CD4-positive, alpha-beta T cell (primary cell): ENCODE measurements at regions of chr10 and their contacts with region 1.

Region 1: DNA sequence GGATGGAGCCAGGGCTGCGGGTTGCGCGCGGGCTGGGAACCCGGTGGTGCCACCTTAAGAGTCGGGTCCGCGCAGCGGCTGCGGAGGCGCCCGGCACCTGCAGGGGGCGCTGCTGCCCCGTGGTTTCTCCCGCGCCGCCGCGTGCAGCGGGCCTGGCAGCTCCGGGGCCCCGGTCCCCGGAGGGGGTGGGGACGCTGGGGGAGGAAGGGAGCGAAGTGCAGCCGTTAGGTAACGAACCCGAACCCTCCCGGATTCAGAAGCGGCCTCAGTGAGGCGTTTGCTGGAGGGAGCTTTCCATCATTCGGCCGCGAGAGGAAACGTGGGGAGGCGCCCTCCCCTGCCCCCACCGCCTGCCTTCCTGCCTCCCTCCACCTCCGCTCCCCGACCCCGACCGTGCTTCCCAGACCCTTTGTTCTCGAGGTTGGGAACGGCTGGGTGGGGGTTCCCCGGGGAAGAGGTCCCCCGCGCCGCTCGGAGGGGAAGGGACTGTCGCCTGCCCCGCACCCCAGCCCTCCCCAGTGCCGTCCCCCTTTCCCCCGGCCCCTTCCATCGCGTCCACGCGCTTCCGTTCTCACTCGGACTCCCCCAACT is 29.6 kb downstream of the SKIDA1 start:
- DNase-seq: peak; percentile 73 to 93 (median 86)
- ATAC-seq: peak; percentile 84
- H3K4me3 ChIP-seq: peak overlapping the region; percentile 73
- H3K4me3 Mint-ChIP-seq: peak overlapping the region; percentile 78
- H3K27ac ChIP-seq: no peak overlapping the region
- H3K27ac Mint-ChIP-seq: peak overlapping the region; percentile 16
- H3K4me1 ChIP-seq: peaks cover 46% of the 10 kb centered on the region
- H3K4me1 Mint-ChIP-seq: peaks cover 25% of the 10 kb centered on the region
- H3K27me3 ChIP-seq: peaks cover 47 to 65% of the 10 kb centered on the region in 2 experiments
- H3K27me3 Mint-ChIP-seq: peaks cover 68% of the 10 kb centered on the region
- CTCF ChIP-seq: peak; percentile 93

Region 2: GRCh38 chr10:21208666-21209316 is 287.1 kb before region 1 on chr10:
- CTCF ChIA-PET with region 1: no interaction called
- POLR2A ChIA-PET with region 1: no interaction called
- intact Hi-C with region 1: no loop called
- DNase-seq: no peak
- ATAC-seq: no peak
- H3K4me3 ChIP-seq: no peak overlapping the region
- H3K4me3 Mint-ChIP-seq: no peak overlapping the region
- H3K27ac ChIP-seq: no peak overlapping the region
- H3K27ac Mint-ChIP-seq: no peak overlapping the region
- H3K4me1 ChIP-seq: no peaks in the 10 kb centered on the region
- H3K4me1 Mint-ChIP-seq: no peaks in the 10 kb centered on the region
- H3K27me3 ChIP-seq: peaks cover 0 to 3% of the 10 kb centered on the region in 2 experiments
- H3K27me3 Mint-ChIP-seq: peaks cover 28% of the 10 kb centered on the region
- CTCF ChIP-seq: no peak

Region 3: DNA sequence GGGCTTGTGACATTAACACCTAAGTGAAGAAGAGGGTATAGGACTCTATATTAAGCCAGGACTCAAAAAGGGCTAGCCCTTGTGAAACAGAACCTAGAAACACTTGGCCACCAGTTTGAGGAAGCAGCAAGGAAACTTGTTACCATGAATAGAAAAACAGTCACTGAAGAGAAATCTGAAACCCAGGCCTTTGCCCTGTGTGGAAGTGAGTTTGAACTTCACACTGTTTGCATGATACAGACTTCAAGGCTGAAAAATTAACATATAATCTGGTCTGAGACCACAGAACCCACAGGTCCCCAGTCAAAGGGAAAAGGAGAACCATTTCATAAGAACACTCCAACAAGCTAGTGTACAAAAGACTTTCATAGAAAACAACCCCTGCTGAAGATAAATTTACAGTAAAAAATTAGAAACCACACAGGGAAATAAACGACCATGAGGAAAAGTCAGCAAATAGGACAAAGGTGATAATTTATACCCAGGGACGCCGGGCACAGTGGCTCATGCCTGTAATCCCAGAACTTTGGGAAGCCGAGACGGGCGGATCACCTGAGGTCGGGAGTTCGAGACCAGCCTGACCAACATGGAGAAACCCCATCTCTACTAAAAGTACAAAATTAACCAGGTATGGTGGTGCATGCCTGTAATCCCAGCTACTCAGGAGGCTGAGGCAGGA is 46.4 kb before region 1 on chr10:
- CTCF ChIA-PET with region 1: no interaction called
- POLR2A ChIA-PET with region 1: no interaction called
- intact Hi-C with region 1: no loop called
- DNase-seq: no peak
- ATAC-seq: no peak
- H3K4me3 ChIP-seq: no peak overlapping the region
- H3K4me3 Mint-ChIP-seq: no peak overlapping the region
- H3K27ac ChIP-seq: no peak overlapping the region
- H3K27ac Mint-ChIP-seq: no peak overlapping the region
- H3K4me1 ChIP-seq: no peaks in the 10 kb centered on the region
- H3K4me1 Mint-ChIP-seq: no peaks in the 10 kb centered on the region
- H3K27me3 ChIP-seq: no peaks in the 10 kb centered on the region
- H3K27me3 Mint-ChIP-seq: peaks cover 10% of the 10 kb centered on the region
- CTCF ChIP-seq: no peak

Region 4: DNA sequence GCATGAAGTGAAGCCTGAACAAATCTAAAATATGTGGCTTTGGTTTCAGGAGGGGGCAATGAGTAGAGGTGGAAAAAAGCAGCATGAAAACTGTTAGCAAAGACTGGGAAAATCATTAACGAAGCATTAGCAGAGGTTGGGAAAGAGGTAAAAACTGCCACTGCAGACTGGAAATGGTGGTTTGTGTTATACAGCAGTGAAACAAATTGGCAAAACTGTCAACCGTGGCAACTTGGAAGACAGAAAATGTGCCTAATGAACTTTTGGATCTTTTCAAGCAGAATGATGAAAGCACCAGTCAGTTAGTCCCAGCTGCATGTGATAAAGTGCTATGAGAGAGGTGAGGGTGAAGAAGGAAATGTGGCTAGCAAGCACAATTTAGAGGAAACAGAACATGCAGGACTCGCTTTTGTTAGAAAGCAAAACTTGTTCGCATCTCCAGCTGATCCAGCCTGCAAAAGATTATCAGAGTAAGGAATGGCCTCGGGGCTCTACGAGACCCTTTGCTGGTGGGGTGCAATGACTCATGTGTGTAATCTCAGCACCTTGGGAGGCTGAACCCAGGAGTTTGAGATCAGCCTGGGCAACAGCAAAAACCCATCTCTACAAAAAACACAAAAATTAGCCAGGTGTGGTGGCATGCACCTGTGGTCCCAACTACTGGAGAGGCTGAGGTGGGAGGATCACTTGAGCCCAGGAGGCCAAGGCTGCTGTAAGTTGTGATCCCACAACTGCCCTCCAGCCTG is 16.1 kb before region 1 on chr10:
- CTCF ChIA-PET with region 1: no interaction called
- POLR2A ChIA-PET with region 1: no interaction called
- intact Hi-C with region 1: no loop called
- DNase-seq: no peak
- ATAC-seq: no peak
- H3K4me3 ChIP-seq: no peak overlapping the region
- H3K4me3 Mint-ChIP-seq: no peak overlapping the region
- H3K27ac ChIP-seq: no peak overlapping the region
- H3K27ac Mint-ChIP-seq: no peak overlapping the region
- H3K4me1 ChIP-seq: no peaks in the 10 kb centered on the region
- H3K4me1 Mint-ChIP-seq: no peaks in the 10 kb centered on the region
- H3K27me3 ChIP-seq: no peaks in the 10 kb centered on the region
- H3K27me3 Mint-ChIP-seq: peaks cover 11% of the 10 kb centered on the region
- CTCF ChIP-seq: no peak

Region 5: GRCh38 chr10:21533467-21534279 is 37.8 kb after region 1 on chr10 and contains the start of gene MLLT10:
- CTCF ChIA-PET with region 1: interaction called, 14 read pairs
- POLR2A ChIA-PET with region 1: interaction called, 6 read pairs
- intact Hi-C with region 1: loop called (anchors 2 to 5 kb)
- DNase-seq: peak; percentile 81 to 98 (median 92)
- ATAC-seq: peak; percentile 83
- H3K4me3 ChIP-seq: peak within 1 kb of the TSS; percentile 85
- H3K4me3 Mint-ChIP-seq: peak within 1 kb of the TSS; percentile 96
- H3K27ac ChIP-seq: peak within 1 kb of the TSS; percentile 81 to 83
- H3K27ac Mint-ChIP-seq: peak within 1 kb of the TSS; percentile 90
- H3K4me1 ChIP-seq: peaks cover 19% of the 10 kb centered on the region
- H3K4me1 Mint-ChIP-seq: peaks cover 29% of the 10 kb centered on the region
- H3K27me3 ChIP-seq: no peaks in the 10 kb centered on the region
- H3K27me3 Mint-ChIP-seq: no peaks in the 10 kb centered on the region
- CTCF ChIP-seq: peak; percentile 30
- total RNA-seq, gene MLLT10: 46.0 to 64.1 TPM

Region 6: DNA sequence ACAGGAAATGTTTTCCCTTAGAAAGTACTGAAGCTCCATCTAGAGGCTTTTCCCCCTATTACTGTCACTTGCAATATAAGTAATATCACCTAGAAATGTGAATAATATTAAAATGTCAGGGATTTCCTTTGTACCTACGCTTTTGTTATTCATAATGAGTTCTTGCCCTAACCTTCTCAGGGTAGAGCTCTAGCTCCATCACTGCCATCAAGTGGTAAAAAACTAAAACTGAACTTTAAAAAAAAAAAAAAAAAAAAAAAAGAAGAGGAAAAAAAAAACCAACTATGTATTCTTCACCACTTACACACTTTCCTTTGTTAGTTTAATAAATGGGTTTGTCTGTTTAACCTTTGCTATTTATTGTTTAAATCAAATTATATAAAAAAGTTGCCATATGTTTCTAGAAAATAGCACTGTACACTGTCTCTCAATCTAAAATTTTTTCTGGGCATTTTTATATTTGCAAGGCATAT is 457.8 kb after region 1 on chr10:
- CTCF ChIA-PET with region 1: interaction called, 9 read pairs
- POLR2A ChIA-PET with region 1: interaction called, 8 read pairs
- intact Hi-C with region 1: loop called (anchors 1 to 2 kb)
- DNase-seq: peak in 3 of 14 experiments; percentile 40 to 58 (median 54)
- ATAC-seq: peak; percentile 70
- H3K4me3 ChIP-seq: no peak overlapping the region
- H3K4me3 Mint-ChIP-seq: no peak overlapping the region
- H3K27ac ChIP-seq: no peak overlapping the region
- H3K27ac Mint-ChIP-seq: no peak overlapping the region
- H3K4me1 ChIP-seq: no peaks in the 10 kb centered on the region
- H3K4me1 Mint-ChIP-seq: no peaks in the 10 kb centered on the region
- H3K27me3 ChIP-seq: no peaks in the 10 kb centered on the region
- H3K27me3 Mint-ChIP-seq: no peaks in the 10 kb centered on the region
- CTCF ChIP-seq: peak; percentile 67

Region 7: DNA sequence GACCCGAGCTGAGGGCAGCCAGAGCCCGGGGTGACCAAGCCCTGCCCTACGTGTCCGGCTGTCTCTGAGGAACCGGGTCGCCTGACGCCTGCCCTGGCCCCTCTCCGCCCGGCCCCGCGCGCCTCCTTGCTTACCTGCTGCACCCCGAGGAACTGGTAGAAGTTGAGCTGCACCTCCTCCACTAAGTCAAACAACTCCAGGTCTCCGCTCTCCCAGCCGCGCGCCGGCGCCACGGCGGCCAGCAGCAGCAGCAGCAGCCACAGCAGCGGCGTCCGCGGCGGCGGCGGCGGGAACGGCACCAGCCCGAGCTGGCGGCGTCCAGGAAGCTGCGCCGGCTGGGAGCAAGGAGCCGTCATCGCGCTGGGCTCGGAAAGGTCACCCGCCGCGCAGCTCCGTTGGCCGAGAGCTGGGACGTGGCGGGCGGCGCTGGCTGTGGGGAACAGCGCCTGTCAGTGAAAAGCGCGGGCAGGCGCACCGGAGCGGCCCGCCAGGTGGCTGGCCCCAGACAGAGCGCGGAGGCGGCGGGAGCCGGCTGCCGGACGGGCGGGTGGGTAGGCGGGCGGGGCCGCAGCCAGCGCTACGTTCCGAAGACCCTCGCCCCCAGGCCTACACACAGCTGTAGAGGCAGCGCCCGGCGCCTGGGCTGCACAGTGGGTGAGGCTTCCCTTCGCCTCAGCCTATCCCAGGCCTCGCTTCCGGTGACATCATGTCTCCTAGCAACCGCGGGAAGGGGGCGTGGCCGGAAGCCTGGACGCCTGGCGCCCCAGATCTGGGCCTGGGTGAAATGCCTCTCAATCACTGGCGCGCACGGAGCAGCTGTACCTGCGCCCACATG is 507.4 kb after region 1 on chr10 and contains the start of gene DNAJC1:
- CTCF ChIA-PET with region 1: interaction called, 4 read pairs
- POLR2A ChIA-PET with region 1: no interaction called
- intact Hi-C with region 1: loop called (anchors 5 kb)
- DNase-seq: peak; percentile 96 to 99 (median 98)
- ATAC-seq: peak; percentile 91
- H3K4me3 ChIP-seq: peak within 1 kb of the TSS; percentile 91
- H3K4me3 Mint-ChIP-seq: peak within 1 kb of the TSS; percentile 95
- H3K27ac ChIP-seq: peak within 1 kb of the TSS; percentile 75 to 79
- H3K27ac Mint-ChIP-seq: peak within 1 kb of the TSS; percentile 84
- H3K4me1 ChIP-seq: peaks cover 12% of the 10 kb centered on the region
- H3K4me1 Mint-ChIP-seq: peaks cover 28% of the 10 kb centered on the region
- H3K27me3 ChIP-seq: no peaks in the 10 kb centered on the region
- H3K27me3 Mint-ChIP-seq: no peaks in the 10 kb centered on the region
- CTCF ChIP-seq: no peak
- total RNA-seq, gene DNAJC1: 16.8 to 19.3 TPM

Region 8: GRCh38 chr10:22420787-22421517 is 925.1 kb after region 1 on chr10:
- CTCF ChIA-PET with region 1: no interaction called
- POLR2A ChIA-PET with region 1: no interaction called
- intact Hi-C with region 1: loop called in 1 of 2 experiments (anchors 5 kb)
- DNase-seq: peak in 4 of 14 experiments; percentile 14 to 59 (median 56)
- ATAC-seq: peak; percentile 43
- H3K4me3 ChIP-seq: no peak overlapping the region
- H3K4me3 Mint-ChIP-seq: no peak overlapping the region
- H3K27ac ChIP-seq: no peak overlapping the region
- H3K27ac Mint-ChIP-seq: no peak overlapping the region
- H3K4me1 ChIP-seq: no peaks in the 10 kb centered on the region
- H3K4me1 Mint-ChIP-seq: no peaks in the 10 kb centered on the region
- H3K27me3 ChIP-seq: no peaks in the 10 kb centered on the region
- H3K27me3 Mint-ChIP-seq: no peaks in the 10 kb centered on the region
- CTCF ChIP-seq: peak; percentile 52

Region 9: GRCh38 chr10:22988581-22989360 is 1492.9 kb after region 1 on chr10:
- CTCF ChIA-PET with region 1: interaction called, 5 read pairs
- POLR2A ChIA-PET with region 1: no interaction called
- intact Hi-C with region 1: loop called (anchors 5 kb)
- DNase-seq: peak; percentile 44 to 87 (median 62)
- ATAC-seq: peak; percentile 81
- H3K4me3 ChIP-seq: no peak overlapping the region
- H3K4me3 Mint-ChIP-seq: no peak overlapping the region
- H3K27ac ChIP-seq: no peak overlapping the region
- H3K27ac Mint-ChIP-seq: no peak overlapping the region
- H3K4me1 ChIP-seq: no peaks in the 10 kb centered on the region
- H3K4me1 Mint-ChIP-seq: peaks cover 13% of the 10 kb centered on the region
- H3K27me3 ChIP-seq: no peaks in the 10 kb centered on the region
- H3K27me3 Mint-ChIP-seq: no peaks in the 10 kb centered on the region
- CTCF ChIP-seq: peak; percentile 95